Sciatic nerve (tissue), 2 donors: ENCODE measurements at regions of chr9 and their contacts with region 1.

Region 1: GRCh38 chr9:134455934-134456739 is 129.9 kb downstream of the RXRA start:
- DNase-seq: peak; percentile 92
- ATAC-seq: peak; percentile 90

Region 2: GRCh38 chr9:133839822-133840329 is 616.3 kb before region 1 on chr9:
- intact Hi-C with region 1: no loop called
- DNase-seq: no peak
- ATAC-seq: peak; percentile 42

Region 3: GRCh38 chr9:134544388-134545214 is 88.5 kb after region 1 on chr9:
- intact Hi-C with region 1: loop called (anchors 5 kb)
- DNase-seq: peak; percentile 75
- ATAC-seq: peak; percentile 65

Region 4: DNA sequence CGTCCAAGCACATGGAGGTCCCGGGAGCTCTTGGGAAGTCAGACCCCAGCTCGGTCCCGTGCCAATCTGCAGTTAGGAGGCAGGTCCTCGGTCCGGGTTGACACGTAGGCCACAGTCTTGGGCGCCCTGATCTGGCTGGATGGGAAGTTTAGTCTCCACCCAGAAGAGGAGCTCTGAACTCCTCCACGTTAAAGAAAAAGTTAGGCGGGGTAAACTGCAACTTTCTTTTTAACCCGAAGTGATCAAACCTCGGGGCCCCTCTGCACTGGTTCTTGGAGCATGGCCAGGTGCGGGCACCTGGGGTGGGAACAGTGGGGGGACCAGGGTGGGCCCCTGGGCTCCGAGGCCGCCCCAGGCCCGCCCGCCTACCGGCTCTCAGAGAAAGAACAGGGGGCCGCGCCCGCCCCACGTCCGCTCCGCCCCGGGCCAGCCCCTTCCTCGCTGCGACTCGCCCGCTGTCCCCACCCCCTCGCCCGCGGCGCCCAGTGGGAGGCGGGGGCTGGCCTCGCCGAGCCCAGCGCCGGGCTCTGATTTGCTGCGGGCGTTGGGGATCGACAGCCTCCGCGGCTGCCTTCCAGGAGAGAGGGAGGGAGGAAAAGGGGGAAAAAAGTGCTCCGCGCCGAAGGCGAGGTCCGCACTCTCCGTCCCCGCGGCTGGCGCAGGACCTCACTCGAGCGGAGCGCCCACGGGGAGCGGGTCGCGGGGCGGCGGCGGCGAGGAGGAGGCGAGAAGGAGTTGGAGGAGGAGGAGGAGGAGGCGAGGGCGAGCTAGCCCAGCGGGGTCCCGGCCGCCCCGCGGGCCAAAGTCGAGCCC is 185.2 kb after region 1 on chr9 and contains the start of gene COL5A1:
- intact Hi-C with region 1: loop called (anchors 10 kb)
- DNase-seq: peak; percentile 95
- ATAC-seq: peak; percentile 82
- total RNA-seq, gene COL5A1: 79.4 TPM

Region 5: DNA sequence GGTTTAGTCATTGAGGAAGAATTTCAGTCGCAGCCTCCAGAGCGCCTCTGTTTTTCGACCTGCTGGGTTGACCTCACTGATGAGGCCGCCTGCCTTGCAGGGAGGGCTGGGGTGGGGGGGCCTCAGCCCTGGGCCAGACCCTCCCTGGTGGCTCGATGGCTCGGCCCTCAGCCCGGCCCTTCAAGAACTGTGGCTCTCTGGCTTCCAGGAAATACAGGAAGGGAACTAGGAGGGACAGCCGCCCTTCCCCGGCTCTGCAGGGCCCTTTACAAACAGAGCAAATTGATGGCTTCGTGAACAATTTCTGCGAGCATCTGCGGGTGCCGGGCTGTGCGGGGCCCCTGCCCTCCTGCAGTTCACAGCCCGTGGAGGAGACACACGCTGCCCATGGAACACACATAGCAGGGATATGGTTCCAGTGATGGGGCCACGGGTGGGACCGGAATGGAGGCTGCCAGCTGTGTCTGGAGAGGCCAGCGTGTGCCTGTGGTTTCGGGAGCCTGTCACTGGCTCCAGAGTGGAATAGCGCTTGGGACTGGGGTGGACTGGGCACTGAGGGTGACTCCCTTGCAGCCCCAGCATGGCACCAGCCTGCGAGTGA is 225.0 kb after region 1 on chr9:
- intact Hi-C with region 1: no loop called
- DNase-seq: no peak
- ATAC-seq: peak; percentile 72